Ascending aorta (tissue), 2 donors: ENCODE measurements at regions of chr2 and their contacts with region 1.

Region 1: GRCh38 chr2:65432227-65433190 is at the start of gene SPRED2:
- DNase-seq: peak; percentile 81 to 98
- H3K4me3 ChIP-seq: peak within 1 kb of the TSS; percentile 86 to 96
- H3K27ac ChIP-seq: peak within 1 kb of the TSS; percentile 93 to 97
- H3K4me1 ChIP-seq: peaks cover 0 to 12% of the 10 kb centered on the region in 2 donors
- H3K27me3 ChIP-seq: no peaks in the 10 kb centered on the region
- CTCF ChIP-seq: peak in 1 of 3 experiments; percentile 17
- total RNA-seq, gene SPRED2: 18.5 TPM

Region 2: GRCh38 chr2:64453770-64454385 is 978.6 kb before region 1 on chr2 and contains the start of gene LGALSL:
- intact Hi-C with region 1: loop called (anchors 5 kb)
- DNase-seq: peak; percentile 50 to 90
- H3K4me3 ChIP-seq: peak within 1 kb of the TSS; percentile 76 to 93
- H3K27ac ChIP-seq: peak within 1 kb of the TSS; percentile 98 to 99
- H3K4me1 ChIP-seq: peaks cover 5% of the 10 kb centered on the region in 2 donors
- H3K27me3 ChIP-seq: no peaks in the 10 kb centered on the region
- CTCF ChIP-seq: no peak
- total RNA-seq, gene LGALSL: 35.4 TPM

Region 3: DNA sequence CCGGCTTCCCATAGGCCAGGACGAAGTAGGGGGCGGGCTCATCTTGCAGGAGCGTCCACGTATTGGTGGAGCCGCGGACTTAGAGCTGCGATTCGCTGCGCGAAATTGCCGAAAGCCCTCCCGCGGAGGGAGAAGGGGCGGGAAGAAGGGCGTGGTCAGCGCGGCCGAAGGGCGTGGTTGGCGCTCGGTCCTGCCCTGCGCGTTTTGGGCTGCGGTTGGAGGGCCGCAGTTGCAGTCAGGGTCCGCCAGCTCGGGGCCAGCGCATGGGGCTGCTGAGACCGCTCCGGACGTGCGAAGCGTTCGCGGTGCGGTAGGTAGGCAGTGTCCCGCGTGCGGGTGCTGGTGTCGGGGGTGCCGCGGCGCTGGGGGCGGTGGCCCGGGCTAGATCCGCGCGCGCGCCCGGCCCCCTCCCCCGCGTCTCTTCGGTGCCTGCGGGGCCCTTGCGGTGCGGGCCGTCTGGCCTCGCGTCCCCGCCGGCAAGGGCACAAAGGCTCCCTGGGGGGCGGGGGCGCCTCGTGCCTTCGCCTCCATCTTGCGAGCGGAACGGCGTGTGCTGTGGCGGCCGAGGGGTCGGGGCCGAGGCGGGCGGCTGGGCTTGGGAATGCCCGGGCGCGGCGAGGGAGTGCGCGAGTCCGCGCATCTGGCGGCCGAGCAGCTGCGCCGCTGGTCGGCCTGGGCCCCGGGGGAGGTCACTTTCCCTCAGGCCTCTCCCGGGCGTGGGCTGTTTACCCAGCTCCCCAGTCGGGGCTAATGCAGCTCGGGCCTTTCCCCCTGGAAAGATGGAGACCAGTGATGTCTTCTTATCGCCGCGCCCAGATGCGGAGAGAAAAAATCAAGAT is 376.1 kb before region 1 on chr2 and contains the start of gene CEP68:
- intact Hi-C with region 1: loop called (anchors 2 kb)
- DNase-seq: peak; percentile 85 to 98
- H3K4me3 ChIP-seq: peak within 1 kb of the TSS; percentile 82 to 94
- H3K27ac ChIP-seq: peak within 1 kb of the TSS; percentile 78 to 86
- H3K4me1 ChIP-seq: peaks cover 4 to 30% of the 10 kb centered on the region in 2 donors
- H3K27me3 ChIP-seq: no peaks in the 10 kb centered on the region
- CTCF ChIP-seq: no peak
- total RNA-seq, gene CEP68: 30.8 TPM

Region 4: DNA sequence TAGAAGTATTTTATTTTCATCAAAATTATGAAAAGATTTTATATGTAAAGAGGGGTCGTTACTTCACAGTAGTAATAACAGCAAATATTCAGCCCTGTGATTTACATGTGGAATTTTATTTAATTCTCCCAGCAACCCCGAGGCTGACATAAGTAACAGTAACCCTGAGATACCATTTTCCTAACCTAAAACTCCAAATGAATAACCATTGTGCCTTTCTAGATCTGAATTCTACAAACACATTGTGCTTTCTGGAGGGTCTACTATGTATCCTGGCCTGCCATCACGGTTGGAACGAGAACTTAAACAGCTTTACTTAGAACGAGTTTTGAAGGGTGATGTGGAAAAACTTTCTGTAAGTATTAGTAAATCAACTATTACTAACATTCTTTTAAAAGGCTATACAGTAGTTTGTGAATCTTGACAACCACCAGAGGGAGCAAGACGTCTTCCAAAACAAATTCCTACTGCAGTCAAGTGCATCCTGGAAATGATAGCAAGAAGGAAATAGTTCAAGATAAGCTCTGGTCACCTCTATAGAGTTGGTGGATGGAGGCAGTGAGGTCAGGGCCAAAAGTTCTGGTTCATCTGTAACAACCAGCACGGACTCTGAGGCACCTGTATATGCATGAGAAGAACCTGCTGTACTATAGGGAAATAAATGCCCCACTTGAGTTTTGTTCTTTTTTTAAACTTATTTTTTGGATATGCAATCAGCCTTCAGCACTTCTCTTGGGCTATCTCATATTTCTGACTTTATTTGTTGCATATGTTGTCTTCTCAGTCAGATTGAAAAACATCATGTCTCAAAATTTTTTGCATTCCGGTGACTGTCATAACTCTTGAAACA is 167.5 kb before region 1 on chr2:
- intact Hi-C with region 1: loop called (anchors 2 kb)
- DNase-seq: no peak
- H3K4me3 ChIP-seq: no peak overlapping the region
- H3K27ac ChIP-seq: no peak overlapping the region
- H3K4me1 ChIP-seq: no peaks in the 10 kb centered on the region
- H3K27me3 ChIP-seq: no peaks in the 10 kb centered on the region
- CTCF ChIP-seq: peak; percentile 54 to 69 (median 57)

Region 5: GRCh38 chr2:65292461-65293011 is 140.0 kb before region 1 on chr2:
- intact Hi-C with region 1: no loop called
- DNase-seq: peak in 1 of 2 donors; percentile 61
- H3K4me3 ChIP-seq: no peak overlapping the region
- H3K27ac ChIP-seq: no peak overlapping the region
- H3K4me1 ChIP-seq: no peaks in the 10 kb centered on the region
- H3K27me3 ChIP-seq: no peaks in the 10 kb centered on the region
- CTCF ChIP-seq: no peak

Region 6: DNA sequence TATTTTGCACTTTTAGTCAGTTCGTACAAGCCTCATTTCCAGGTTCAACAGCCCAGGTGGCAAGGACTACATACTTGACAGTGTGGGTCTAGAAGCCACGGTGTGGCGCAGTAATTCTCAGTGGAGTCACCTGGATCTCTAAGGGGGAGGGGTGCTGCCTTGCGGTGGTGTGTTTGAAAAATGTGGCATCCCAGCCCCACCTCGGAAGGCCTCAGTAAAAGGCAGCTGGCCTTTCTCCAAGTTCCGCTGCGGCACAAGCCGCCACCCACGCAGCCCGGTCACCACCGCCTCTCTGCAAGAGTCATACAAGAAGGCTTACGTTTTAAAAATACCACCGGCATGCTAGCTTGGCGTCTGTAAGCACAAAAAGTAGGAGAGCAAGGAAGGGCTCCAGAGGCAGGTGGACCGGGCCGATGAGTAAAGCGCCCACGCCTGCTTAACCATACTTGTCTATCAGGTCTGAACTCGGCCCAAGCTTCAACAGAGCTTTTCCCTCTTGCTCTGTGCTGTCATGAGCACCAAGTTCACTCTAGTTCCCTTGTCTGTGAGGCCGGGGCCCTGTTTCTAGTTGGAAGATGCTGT is 49.6 kb before region 1 on chr2:
- intact Hi-C with region 1: loop called (anchors 5 kb)
- DNase-seq: peak; percentile 53 to 91
- H3K4me3 ChIP-seq: peak overlapping the region; percentile 10 to 40
- H3K27ac ChIP-seq: peak overlapping the region; percentile 67 to 78
- H3K4me1 ChIP-seq: peaks cover 11 to 25% of the 10 kb centered on the region in 2 donors
- H3K27me3 ChIP-seq: no peaks in the 10 kb centered on the region
- CTCF ChIP-seq: no peak

Region 7: GRCh38 chr2:65456064-65456463 is 23.6 kb after region 1 on chr2:
- intact Hi-C with region 1: no loop called
- DNase-seq: no peak
- H3K4me3 ChIP-seq: no peak overlapping the region
- H3K27ac ChIP-seq: no peak overlapping the region
- H3K4me1 ChIP-seq: no peaks in the 10 kb centered on the region
- H3K27me3 ChIP-seq: no peaks in the 10 kb centered on the region
- CTCF ChIP-seq: no peak

Region 8: GRCh38 chr2:65576861-65577601 is 144.5 kb after region 1 on chr2:
- intact Hi-C with region 1: loop called (anchors 2 kb)
- DNase-seq: no peak
- H3K4me3 ChIP-seq: peak overlapping the region in 1 of 2 donors; percentile 43
- H3K27ac ChIP-seq: peak overlapping the region; percentile 78 to 82
- H3K4me1 ChIP-seq: peaks cover 2 to 20% of the 10 kb centered on the region in 2 donors
- H3K27me3 ChIP-seq: no peaks in the 10 kb centered on the region
- CTCF ChIP-seq: no peak